AG04449 (cell line): ENCODE measurements at regions of chr2 and their contacts with region 1.

Region 1: DNA sequence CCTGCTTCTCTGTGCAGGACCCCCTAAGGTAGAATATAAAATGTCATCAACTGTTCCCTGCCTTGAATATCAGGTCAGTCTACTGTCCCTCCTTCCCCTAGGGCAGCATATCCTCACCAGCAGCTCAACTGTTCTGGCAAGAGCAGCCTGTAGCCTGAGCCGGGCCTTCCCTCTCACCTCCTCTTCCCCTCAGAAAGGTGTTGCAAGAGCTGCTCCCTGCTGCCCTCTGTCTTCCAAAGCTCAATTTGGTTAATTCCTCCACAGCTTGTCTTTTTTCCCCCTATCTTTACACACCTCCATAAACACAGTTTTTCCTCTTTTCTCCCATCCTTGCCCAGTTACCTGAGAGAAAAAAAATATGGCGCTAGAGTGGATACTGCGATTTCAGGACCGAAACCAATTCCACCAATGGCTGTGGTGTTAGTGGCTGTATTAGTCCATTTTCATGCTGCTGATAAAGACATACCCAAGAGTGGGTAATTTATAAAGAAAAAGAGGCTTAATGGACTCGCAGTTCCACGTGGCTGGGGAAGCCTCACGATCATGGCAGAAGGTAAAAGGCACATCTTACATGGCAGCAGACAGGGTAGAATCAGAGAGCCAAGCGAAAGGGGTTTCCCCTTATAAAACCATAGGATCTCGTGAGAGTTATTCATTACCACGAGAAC is 184.7 kb downstream of the MREG start:
- DNase-seq: no peak
- H3K4me3 ChIP-seq: no peak overlapping the region
- CTCF ChIP-seq: peak; percentile 55

Region 2: GRCh38 chr2:215812966-215813365 is 15.7 kb before region 1 on chr2:
- CTCF ChIA-PET with region 1: interaction called, 13 read pairs
- POLR2A ChIA-PET with region 1: no interaction called
- DNase-seq: no peak
- H3K4me3 ChIP-seq: no peak overlapping the region
- CTCF ChIP-seq: no peak

Region 3: DNA sequence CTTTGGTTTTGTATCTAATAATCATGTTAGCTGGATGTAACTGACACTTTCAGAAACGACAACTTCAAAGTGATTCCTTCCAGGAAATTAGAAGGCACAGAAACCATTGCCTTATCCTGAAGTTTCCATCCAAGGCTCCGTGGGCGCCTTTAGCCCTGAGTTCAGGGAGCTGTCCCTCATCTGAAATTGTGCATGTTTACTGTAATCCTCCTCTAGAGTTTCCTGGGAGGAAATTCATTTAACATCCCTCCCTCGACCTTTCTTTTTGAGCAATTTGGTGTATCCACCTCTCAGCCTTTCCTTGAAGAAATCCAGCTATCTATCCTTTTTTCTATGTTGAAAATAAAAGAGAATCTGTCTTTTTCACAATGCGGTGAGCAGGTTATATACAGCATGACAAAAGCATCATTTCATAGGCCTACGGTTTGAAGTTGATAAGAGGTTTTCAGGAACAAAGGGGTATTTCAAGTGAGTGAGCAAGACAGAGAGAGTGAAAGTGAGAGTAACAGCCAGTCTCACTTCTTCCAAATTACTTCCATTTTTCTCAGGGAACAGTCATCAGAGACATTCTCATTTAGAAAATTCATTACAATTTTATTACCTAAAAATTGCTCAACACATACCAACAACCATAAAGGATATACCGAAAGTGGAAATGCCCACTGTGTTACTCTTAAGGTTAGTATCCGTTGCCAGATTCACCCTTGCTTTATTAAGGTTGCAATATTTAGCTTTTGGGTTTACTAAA is 17.4 kb after region 1 on chr2:
- CTCF ChIA-PET with region 1: interaction called, 15 read pairs
- POLR2A ChIA-PET with region 1: no interaction called
- DNase-seq: no peak
- H3K4me3 ChIP-seq: no peak overlapping the region
- CTCF ChIP-seq: no peak

Region 4: DNA sequence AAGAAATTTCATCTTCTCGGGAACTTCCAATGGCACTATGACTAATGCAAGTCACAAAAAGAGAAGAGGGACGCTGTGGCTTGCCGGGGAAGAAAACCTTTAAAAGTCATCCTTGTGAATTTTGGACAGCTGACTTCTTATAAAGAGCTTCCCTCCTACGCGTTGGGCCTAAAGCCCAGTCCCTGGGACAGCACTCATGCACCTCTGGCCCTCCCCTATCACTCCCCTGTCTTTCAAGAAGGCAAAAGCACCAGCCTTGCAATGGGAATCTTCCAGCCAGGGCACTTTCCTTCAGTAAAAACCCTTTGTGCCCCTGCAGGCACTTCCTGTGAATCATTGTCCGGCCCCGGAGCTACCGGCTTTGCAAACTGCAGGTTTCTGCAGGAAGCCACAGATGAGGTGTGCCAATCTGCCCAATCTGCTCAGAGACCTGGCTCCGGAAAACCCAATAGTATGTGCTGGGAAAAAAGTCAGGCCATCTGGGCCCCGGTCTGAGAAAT is 177.6 kb after region 1 on chr2:
- CTCF ChIA-PET with region 1: no interaction called
- POLR2A ChIA-PET with region 1: no interaction called
- DNase-seq: no peak
- H3K4me3 ChIP-seq: no peak overlapping the region
- CTCF ChIP-seq: no peak